ENCODE measurements at regions of chr18 and their contacts with region 1.

Region 1: GRCh38 chr18:46173393-46174341 is 69.5 kb downstream of the HAUS1 start:
- DNase-seq: peak; percentile 96
- H3K4me3 Mint-ChIP-seq: peak overlapping the region; percentile 99
- H3K27ac Mint-ChIP-seq: peak overlapping the region; percentile 100
- H3K4me1 Mint-ChIP-seq: peaks cover 71% of the 10 kb centered on the region
- H3K27me3 Mint-ChIP-seq: peaks cover 8% of the 10 kb centered on the region

Region 2: DNA sequence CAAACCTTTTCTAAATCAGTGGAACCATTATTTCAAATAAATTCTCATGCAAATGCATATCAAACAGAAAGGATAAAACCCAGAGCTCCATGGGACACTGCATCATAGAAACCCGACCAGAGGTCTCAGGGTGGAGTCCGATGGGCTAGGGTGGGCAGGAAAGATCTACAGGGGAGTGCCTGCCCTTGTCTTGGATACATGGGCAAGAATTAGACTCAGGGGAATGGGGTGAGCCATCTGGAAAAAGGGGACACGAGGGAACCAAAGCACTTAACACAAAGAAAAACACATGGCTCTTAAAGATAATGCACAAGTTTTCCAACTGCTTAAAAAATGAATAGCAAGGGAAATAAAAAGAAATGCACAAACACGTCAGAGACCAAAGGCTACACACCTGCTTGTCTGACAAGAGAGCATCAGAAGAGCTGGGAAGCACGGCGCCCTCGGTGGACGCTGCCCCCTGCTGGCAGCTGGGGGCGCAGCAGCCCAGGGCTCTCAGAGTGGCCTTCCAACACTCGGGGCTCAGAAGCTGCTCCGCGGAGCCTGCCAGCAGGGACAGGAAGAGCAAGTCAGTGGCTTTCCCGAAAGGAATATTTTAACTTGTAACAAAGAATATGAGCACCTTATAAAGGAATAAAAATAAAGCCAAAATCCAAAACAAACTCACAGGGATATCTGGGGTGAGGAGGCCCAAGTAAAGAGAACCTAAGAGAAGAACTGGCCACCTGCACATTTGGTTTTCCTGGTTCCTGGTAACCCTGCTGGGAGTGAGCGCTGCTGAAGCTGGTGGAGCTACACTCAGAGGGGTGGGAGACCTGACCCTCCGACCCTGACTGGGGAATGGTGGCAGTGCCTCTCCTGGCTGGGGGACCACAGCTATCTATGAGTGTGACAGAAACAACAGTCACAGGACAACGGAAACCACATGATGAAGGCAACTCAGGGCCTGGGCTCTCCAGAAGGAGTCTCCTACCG is 293.7 kb before region 1 on chr18:
- CTCF ChIA-PET with region 1: no interaction called
- DNase-seq: peak; percentile 74
- H3K4me3 Mint-ChIP-seq: no peak overlapping the region
- H3K27ac Mint-ChIP-seq: no peak overlapping the region
- H3K4me1 Mint-ChIP-seq: peaks cover 12% of the 10 kb centered on the region
- H3K27me3 Mint-ChIP-seq: no peaks in the 10 kb centered on the region

Region 3: DNA sequence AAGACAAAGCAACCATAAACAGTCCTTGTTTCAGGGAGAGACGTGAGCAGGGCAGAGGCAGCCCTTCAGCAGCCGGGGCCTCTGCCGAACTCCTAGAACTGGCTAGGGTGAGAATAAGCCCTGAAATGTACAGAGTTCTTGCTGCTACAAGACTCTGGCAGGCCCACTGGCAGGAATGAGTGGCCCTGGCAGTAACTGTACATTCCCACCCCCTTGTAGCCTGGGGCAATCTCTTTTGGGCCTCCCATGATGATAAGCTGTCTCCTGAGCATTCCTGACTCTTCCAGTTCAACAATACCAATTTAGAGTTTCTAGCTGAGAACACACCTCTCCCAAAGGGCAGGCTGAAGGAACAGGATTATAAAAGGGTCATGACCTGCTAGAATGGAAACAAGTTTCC is 15.2 kb before region 1 on chr18:
- CTCF ChIA-PET with region 1: interaction called, 96 read pairs
- DNase-seq: no peak
- H3K4me3 Mint-ChIP-seq: no peak overlapping the region
- H3K27ac Mint-ChIP-seq: peak overlapping the region; percentile 97
- H3K4me1 Mint-ChIP-seq: peaks cover 92% of the 10 kb centered on the region
- H3K27me3 Mint-ChIP-seq: no peaks in the 10 kb centered on the region

Region 4: DNA sequence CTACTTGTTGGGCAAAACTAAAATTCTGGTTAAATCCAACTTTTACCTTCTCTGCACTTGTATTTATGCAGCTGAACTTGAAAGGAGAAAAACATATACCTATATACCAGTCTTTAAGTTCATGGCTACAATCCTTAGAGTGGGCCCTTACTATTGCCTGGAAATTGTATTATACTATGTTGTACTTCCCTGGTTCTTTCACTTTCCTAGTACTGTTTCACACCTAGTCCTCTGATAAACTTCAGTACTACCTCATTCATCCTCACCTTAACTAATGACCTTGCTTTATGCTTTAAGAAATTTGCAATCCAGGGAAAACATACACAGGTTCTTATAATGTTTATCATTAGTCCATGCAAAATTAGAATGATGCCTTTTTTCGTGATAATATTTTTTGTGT is 34.3 kb after region 1 on chr18:
- CTCF ChIA-PET with region 1: interaction called, 38 read pairs
- DNase-seq: no peak
- H3K4me3 Mint-ChIP-seq: no peak overlapping the region
- H3K27ac Mint-ChIP-seq: peak overlapping the region; percentile 6
- H3K4me1 Mint-ChIP-seq: peaks cover 85% of the 10 kb centered on the region
- H3K27me3 Mint-ChIP-seq: no peaks in the 10 kb centered on the region

Region 5: GRCh38 chr18:46220116-46220515 is 46.4 kb after region 1 on chr18:
- CTCF ChIA-PET with region 1: interaction called, 16 read pairs
- DNase-seq: no peak
- H3K4me3 Mint-ChIP-seq: no peak overlapping the region
- H3K27ac Mint-ChIP-seq: no peak overlapping the region
- H3K4me1 Mint-ChIP-seq: peaks cover 69% of the 10 kb centered on the region
- H3K27me3 Mint-ChIP-seq: no peaks in the 10 kb centered on the region

Region 6: DNA sequence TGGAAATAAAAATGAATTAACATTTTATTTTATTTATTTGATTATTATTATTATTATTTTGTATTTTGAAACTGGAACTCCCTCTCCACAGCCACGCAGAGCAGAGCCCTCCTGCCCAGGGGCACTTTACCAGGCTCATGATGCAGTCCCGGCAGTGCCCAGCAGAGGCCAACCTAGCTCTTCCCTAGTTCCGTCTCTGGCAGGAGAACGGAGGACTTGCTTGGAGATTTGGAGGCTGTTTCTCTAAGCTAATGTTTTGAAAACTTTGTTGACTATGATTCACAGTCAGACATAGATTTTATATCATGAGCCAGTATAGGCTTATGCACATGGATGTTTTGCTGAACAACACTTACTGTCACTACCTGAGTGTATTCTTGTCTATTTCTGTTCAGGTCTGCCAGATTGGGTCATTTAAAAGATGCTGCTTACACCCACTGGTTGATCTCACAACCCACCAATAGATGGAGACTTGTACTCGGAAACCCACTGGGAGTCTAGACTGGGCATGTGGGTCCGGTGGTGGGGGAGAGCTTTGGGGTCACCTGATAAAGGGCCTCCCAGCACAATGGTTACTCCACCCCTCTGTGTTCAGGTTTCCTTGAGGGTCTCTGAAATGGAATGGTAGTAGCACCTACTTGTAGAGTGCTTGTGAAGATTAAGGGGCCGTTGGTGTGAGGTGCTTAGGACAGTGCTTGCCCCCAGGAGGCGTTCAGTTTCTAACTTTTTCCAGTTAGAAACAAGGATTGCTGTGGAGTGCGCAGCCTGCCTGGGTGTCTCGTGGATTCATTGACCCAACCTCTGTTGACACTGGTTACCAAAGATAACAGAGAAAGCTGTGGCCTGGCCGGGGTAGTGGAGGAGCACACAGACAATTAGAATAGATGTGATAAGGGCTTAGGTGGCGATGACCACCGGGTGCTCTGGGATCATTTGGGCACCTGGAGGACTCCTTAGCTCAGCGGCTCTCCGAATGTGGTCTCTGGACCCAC is 107.8 kb after region 1 on chr18:
- CTCF ChIA-PET with region 1: interaction called, 18 read pairs
- DNase-seq: peak; percentile 77
- H3K4me3 Mint-ChIP-seq: no peak overlapping the region
- H3K27ac Mint-ChIP-seq: no peak overlapping the region
- H3K4me1 Mint-ChIP-seq: peaks cover 12% of the 10 kb centered on the region
- H3K27me3 Mint-ChIP-seq: no peaks in the 10 kb centered on the region

Region 7: DNA sequence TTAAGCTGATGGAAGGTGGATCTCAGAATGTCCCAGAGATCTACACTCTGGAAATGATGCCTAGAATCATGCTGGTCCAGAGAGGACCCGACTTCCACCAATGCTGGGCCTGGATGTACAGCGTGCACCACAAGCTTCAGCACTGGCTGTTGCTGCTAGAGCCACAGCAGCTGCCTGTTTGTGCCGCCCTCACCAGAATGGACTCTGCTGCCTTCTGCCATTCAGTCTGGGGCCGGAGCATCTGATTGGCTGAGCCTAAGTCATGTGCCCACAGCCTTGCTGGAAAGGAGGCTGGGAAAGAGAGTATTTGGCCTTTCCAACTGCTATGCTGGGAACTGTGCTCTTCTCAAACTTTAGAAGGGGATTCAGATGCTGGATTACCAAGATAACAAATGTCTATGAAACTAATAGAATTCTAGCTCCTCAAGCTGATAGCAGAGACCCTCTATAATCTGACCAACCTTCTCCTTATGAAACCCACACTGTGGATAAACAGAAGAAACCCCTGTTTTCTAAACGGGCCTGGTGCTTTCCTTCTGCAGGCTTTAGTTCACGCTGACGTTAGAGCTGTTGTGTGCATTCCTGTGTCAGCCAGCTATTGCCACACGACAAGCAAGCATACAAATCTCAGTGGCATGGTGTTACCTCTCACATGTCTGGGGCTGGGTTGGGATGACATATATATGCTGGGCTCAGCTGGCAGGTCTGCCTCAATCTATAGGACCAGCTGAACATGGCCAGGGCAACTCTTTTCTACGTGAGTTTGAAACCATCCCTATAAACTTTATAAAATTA is 487.5 kb after region 1 on chr18:
- CTCF ChIA-PET with region 1: interaction called, 29 read pairs
- DNase-seq: no peak
- H3K4me3 Mint-ChIP-seq: no peak overlapping the region
- H3K27ac Mint-ChIP-seq: no peak overlapping the region
- H3K4me1 Mint-ChIP-seq: no peaks in the 10 kb centered on the region
- H3K27me3 Mint-ChIP-seq: peaks cover 18% of the 10 kb centered on the region